ENCODE measurements at regions of chr2 and their contacts with region 1.

Region 1: GRCh38 chr2:169609264-169609663 is 25.1 kb downstream of the PPIG start:
- H3K4me3 Mint-ChIP-seq: no peak overlapping the region
- H3K27ac Mint-ChIP-seq: no peak overlapping the region
- H3K4me1 Mint-ChIP-seq: no peaks in the 10 kb centered on the region
- H3K27me3 Mint-ChIP-seq: no peaks in the 10 kb centered on the region

Region 2: DNA sequence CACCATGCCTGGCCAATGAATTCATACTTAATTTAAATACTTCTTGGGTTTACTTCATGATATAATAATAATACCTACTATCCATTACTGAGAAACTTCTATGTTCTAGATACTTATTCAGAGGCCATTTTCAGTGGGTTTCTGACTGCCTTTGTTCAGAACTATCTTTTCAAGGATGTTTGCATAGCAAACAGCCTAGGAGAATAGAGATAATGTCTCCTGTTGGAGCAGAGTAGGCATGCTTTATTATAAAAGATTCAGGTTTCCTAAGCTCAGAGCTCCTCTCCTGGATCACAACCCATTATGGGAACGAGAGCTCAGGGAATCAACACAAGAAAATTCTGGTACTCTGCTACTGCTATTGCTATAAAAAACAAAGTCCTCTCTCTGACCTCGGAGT is 46.7 kb before region 1 on chr2:
- intact Hi-C with region 1: loop called (anchors 10 kb)
- H3K4me3 Mint-ChIP-seq: no peak overlapping the region
- H3K27ac Mint-ChIP-seq: no peak overlapping the region
- H3K4me1 Mint-ChIP-seq: no peaks in the 10 kb centered on the region
- H3K27me3 Mint-ChIP-seq: no peaks in the 10 kb centered on the region